Heart right ventricle (tissue), 16 donors: ENCODE measurements at regions of chr17 and their contacts with region 1.

Region 1: GRCh38 chr17:76121932-76122430 is 18.4 kb upstream of the EXOC7 start:
- DNase-seq: peak in 1 of 2 donors; percentile 31
- ATAC-seq: peak; percentile 25 to 63 (median 42)
- H3K4me3 ChIP-seq: peak overlapping the region; percentile 25 to 55 (median 50)
- H3K27ac ChIP-seq: peak overlapping the region in 4 of 10 donors; percentile 22 to 69 (median 42)
- H3K4me1 ChIP-seq: peaks cover 0 to 14% (median 6%) of the 10 kb centered on the region in 9 donors
- H3K27me3 ChIP-seq: no peaks in the 10 kb centered on the region
- CTCF ChIP-seq: no peak

Region 2: DNA sequence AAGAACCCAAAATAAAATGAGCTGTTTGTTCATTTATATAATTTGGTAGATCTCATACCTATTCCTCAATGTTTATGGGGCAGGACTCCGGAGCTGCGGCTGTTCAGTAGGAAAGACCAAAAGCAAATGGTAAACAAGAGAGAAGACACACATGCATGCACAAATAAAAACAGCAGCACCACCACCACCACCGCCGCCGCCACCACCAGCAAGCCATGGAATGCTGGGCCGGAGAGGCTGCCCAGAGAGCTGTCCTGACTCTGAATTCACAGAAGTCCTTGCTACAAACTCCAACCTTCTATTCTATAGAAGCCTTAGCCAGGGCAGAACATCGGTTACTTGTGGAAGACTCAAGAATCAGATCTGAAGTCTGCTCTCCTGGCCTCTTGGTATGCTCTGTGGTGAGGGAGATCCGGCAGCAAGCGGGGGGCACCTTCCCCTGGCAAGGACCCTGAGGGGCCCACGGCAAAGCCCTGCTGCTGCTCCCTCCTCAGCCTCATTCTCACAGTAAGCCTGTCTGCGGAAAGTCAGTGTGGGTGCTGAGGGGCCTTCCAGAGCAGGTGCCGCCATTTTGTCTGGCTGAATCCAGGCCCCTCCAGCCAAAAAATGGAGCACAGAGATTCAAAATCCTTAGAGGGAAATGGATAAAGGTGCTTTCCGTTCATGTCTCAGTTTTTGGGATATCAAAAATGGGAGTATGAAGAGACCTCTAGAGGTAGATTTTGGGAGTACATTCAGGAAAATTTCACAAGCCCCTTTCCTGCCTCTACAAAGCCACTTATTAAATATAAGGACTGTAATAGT is 25.4 kb after region 1 on chr17:
- intact Hi-C with region 1: loop called in 2 of 10 experiments (anchors 2 kb)
- DNase-seq: no peak
- ATAC-seq: no peak
- H3K4me3 ChIP-seq: no peak overlapping the region
- H3K27ac ChIP-seq: no peak overlapping the region
- H3K4me1 ChIP-seq: peaks cover 3 to 43% (median 25%) of the 10 kb centered on the region in 9 donors
- H3K27me3 ChIP-seq: no peaks in the 10 kb centered on the region
- CTCF ChIP-seq: peak; percentile 13 to 66 (median 53)

Region 3: DNA sequence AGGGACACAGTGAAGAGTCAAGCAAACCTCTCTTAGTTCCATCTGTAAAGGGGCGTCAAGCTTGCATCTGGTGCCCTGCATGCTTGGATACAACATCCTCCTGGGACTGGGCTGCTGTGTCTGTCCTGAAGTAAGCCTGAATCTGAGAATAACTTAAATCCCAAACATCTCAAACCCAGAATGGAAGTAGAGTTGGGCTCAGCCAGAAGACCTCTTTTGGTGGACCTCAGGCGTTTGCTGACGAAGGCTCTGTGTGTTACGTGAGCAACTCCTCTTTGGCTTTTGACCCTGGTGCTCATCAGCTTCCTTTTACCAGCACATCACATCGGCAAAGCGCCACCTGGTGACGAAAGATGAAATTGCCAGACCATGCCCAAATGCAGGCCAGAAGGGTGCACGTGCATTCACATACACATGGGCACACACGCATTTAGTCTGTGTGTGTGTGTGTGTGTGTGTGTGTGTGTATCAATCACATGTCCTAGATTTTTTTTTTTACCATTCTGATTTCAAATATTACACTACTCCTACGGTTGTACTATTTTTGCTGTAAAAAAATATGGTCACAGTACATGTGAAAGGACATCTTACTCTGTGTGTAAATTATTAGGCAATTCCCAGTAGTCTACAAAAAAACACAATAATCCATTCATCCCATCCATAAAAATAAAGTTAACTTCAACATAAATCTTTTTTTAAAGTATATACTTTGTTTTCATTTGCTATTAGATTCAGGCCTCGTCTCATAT is 60.2 kb after region 1 on chr17:
- intact Hi-C with region 1: loop called (anchors 1 to 10 kb)
- DNase-seq: peak; percentile 85 to 89
- ATAC-seq: peak; percentile 80 to 92 (median 86)
- H3K4me3 ChIP-seq: no peak overlapping the region
- H3K27ac ChIP-seq: peak overlapping the region in 1 of 10 donors; percentile 61
- H3K4me1 ChIP-seq: peaks cover 0 to 23% (median 3%) of the 10 kb centered on the region in 9 donors
- H3K27me3 ChIP-seq: no peaks in the 10 kb centered on the region
- CTCF ChIP-seq: peak; percentile 71 to 93 (median 87)

Region 4: GRCh38 chr17:76296186-76296585 is 174.2 kb after region 1 on chr17:
- intact Hi-C with region 1: loop called in 2 of 10 experiments (anchors 2 to 5 kb)
- DNase-seq: no peak
- ATAC-seq: peak in 7 of 8 donors; percentile 41 to 65 (median 49)
- H3K4me3 ChIP-seq: no peak overlapping the region
- H3K27ac ChIP-seq: peak overlapping the region in 1 of 10 donors; percentile 31
- H3K4me1 ChIP-seq: peaks cover 0 to 14% (median 6%) of the 10 kb centered on the region in 9 donors
- H3K27me3 ChIP-seq: no peaks in the 10 kb centered on the region
- CTCF ChIP-seq: no peak